Gastrocnemius medialis (tissue), 4 donors: ENCODE measurements at regions of chr17 and their contacts with region 1.

Region 1: DNA sequence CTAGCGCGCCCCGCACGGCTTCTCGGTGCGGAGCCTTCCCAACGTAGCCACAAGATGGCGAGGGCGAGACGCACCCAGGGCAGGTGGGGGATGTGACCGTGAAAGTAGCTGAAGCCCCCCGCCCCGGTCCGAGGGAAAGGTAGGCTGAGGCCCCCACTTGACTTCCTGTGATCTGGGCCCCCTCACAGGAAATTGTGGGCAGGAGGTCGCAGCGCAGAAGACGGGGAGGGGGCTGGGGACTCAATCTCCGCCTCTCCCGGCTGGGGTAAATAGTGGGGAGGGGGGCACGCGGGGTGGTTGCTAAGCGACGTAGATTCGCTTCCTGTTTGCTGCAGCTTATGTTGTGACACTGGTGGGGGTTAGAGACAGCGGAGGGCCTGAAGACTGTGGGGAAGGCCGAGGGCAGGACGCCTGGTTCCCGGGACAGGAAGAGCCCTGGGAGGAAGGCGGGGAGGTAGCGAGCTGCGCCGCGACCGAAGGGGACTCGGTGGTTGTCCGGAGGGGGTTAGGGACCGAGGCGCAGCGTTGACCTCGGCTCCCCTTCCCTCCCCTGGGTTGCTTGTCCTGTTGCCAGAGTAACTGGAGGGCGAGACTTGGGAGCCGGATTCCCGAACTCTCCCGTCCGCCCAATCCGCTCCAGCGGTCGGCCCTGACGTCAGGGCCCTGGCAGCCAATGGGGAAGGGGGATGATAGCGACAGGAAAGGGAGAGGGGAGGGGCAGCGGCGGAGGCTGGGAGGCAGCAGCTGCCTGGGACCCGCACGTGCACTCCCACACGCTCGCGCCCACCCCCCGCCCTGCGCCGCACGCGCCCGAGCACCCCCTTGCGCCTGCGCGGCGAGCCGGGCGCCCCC is 1.2 kb downstream of the KDM6B start:
- DNase-seq: peak; percentile 97 to 98
- ATAC-seq: peak; percentile 65 to 74
- H3K4me3 ChIP-seq: peak overlapping the region; percentile 81 to 90 (median 85)
- H3K27ac ChIP-seq: peak overlapping the region; percentile 97 to 100 (median 100)
- H3K4me1 ChIP-seq: peaks cover 39 to 44% of the 10 kb centered on the region in 2 donors
- H3K27me3 ChIP-seq: no peaks in the 10 kb centered on the region
- CTCF ChIP-seq: peak; percentile 87 to 96 (median 88)
- POLR2A ChIP-seq: peak; percentile 84 to 94

Region 2: DNA sequence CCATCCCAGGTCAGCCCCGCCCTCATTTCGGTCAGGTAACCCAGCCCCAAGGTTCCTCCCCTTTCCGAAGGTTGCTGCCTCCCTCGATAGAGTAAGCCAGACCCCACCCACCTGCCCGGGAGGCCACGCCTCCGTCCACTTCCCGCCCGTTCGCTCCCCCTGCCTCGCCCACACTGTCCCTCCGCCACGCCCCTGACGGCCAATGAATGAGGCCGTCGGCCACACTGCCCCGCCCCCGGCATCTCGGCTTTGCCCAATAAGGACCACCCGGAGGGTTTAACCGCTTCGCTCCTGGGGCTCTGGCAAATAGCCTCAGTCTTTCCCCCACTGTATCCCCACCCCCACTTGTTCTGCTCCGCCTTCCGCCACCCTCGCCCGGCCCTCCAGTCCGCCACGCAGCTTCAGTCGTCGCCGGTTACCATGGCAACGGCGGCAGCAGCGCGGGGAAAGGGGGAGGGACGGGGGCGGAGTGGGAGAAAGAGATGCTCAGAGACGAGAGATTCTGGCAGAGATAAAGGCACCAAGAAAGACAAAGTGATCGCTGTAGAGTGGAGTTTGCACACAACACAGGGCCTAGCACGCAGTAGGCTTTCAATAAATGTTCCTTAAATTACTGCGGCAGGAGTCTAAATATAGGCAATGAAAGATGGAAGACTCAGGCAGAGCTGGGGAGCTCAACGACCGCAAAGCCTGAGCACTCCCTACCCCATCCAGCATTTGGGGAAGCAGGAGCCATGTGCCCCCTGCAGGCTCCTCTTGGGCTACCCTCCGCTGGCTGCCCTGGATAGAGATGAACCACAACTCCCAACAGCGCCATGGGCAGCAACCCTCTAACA is 620.7 kb before region 1 on chr17:
- in situ Hi-C with region 1: no loop called
- intact Hi-C with region 1: loop called (anchors 10 kb)
- DNase-seq: peak; percentile 91 to 92
- ATAC-seq: peak; percentile 83 to 88
- H3K4me3 ChIP-seq: peak overlapping the region; percentile 61 to 80 (median 68)
- H3K27ac ChIP-seq: peak overlapping the region; percentile 62 to 76 (median 64)
- H3K4me1 ChIP-seq: peaks cover 39 to 43% of the 10 kb centered on the region in 2 donors
- H3K27me3 ChIP-seq: peaks cover 8 to 20% (median 13%) of the 10 kb centered on the region in 3 donors
- CTCF ChIP-seq: peak in 4 of 5 experiments; percentile 40 to 59 (median 44)
- POLR2A ChIP-seq: no peak

Region 3: DNA sequence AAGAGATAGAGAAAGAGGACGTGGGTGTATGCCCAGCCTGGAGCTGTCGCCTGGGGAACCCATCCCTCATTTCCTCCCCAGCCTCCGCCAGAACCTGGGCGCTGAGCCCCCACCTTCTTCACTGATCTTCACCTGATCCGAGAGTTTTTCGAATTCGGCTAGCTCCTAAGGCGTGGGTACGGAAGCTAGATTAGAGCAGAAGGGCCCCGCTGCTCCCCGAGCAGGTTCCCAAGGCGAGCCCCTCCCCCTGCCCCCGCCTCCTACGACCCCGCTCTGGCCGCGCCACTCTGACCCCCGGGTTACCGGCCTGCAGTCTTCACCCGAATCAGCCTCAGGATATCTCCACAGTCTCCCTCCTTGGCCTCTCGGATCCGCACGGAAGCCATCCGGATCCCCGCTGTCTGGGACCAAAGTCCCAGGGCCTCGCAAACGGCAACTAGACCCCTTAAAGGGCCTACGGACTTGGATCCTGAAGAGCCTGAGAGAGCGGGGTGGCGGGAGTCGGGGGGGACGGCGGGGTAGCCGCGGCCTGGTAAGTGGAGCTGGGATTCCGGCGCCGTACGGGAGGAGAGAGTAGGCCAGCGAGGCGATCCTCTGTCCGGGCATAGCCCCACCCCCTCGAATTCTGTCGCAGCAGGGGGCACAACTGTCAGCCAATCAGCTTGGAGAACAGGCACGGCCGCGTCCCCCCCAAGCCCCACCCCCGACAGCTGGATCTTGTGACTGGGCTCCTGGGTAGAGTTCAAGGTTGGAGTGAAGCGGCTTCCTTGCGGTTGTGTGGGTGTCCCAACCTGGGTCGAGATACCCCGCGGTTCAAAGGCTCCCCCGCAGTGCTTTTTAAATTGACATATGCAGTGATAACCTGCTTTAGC is 207.7 kb before region 1 on chr17 and contains the start of gene SAT2:
- in situ Hi-C with region 1: no loop called
- intact Hi-C with region 1: loop called (anchors 5 kb)
- DNase-seq: peak; percentile 96 to 98
- ATAC-seq: peak; percentile 97 to 98
- H3K4me3 ChIP-seq: peak within 1 kb of the TSS; percentile 74 to 90 (median 80)
- H3K27ac ChIP-seq: peak within 1 kb of the TSS; percentile 93 to 99 (median 96)
- H3K4me1 ChIP-seq: peaks cover 8 to 10% of the 10 kb centered on the region in 2 donors
- H3K27me3 ChIP-seq: no peaks in the 10 kb centered on the region
- CTCF ChIP-seq: no peak
- POLR2A ChIP-seq: peak; percentile 79 to 91
- total RNA-seq, gene SAT2: 38.4 to 79.4 (median 60.4) TPM

Region 4: DNA sequence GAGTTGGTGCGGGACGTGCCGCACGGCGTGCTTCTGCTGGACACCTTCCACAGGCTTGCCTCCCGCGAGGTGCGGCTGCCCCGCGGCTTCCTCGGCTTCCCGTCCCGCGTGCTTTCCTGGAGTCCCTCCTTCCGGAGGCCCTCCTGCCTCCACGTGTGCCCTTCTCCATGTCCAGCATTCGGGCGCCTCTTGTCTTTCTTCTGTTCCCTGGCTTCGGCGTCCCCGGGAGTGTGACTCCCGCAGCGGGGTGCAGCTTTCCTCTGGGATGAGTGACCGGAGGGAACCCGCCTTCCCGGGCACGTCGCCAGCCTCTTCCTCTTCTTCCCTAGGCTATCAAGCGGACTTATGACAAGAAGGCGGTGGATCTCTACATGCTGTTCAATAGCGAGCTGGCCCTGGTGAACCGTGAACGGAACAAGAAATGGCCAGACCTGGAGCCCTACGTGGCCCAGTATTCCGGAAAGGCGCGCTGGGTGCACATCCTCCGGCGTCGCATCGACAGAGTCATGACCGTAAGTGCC is 94.6 kb before region 1 on chr17:
- in situ Hi-C with region 1: no loop called
- intact Hi-C with region 1: no loop called
- DNase-seq: no peak
- ATAC-seq: no peak
- H3K4me3 ChIP-seq: peak overlapping the region in 3 of 4 donors; percentile 13 to 25 (median 15)
- H3K27ac ChIP-seq: no peak overlapping the region
- H3K4me1 ChIP-seq: no peaks in the 10 kb centered on the region
- H3K27me3 ChIP-seq: peaks cover 0 to 10% (median 7%) of the 10 kb centered on the region in 3 donors
- CTCF ChIP-seq: no peak
- POLR2A ChIP-seq: no peak

Region 5: DNA sequence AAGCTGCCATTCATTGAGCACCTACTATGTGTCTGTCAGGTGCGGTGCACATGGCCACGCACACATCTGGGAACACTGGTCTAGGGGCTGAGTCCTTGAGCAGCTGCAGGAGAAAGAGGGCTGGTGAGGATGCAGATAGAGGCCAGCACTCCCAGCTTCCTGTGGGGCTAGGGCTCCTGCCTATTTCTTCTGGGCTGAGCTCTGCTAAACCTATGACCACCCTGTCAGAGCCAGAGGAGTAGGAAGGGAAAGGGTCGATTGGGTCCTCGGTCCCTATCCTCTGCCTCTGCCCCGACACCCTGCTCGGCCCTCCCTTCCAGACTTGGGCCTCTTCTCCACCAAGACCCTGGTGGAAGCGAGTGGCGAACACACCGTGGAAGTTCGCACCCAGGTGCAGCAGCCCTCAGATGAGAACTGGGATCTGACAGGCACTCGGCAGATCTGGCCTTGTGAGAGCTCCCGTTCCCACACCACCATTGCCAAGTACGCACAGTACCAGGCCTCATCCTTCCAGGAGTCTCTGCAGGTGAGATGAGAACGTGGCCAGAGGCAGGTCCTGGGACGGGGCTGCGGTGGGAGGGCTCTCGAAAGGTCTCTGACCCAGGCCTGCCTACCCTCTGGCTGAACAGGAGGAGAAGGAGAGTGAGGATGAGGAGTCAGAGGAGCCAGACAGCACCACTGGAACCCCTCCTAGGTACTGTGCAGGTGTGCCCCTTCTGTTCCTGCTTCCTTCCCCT is 15.7 kb after region 1 on chr17:
- in situ Hi-C with region 1: no loop called
- intact Hi-C with region 1: no loop called
- DNase-seq: peak in 1 of 2 donors; percentile 14
- ATAC-seq: no peak
- H3K4me3 ChIP-seq: no peak overlapping the region
- H3K27ac ChIP-seq: peak overlapping the region in 3 of 4 donors; percentile 12 to 50 (median 42)
- H3K4me1 ChIP-seq: peaks cover 12 to 15% of the 10 kb centered on the region in 2 donors
- H3K27me3 ChIP-seq: no peaks in the 10 kb centered on the region
- CTCF ChIP-seq: no peak
- POLR2A ChIP-seq: no peak